Activated CD4-positive, alpha-beta memory T cell treated with anti-CD3 and anti-CD28 coated beads for 36 hours (primary cell): ENCODE measurements at regions of chr18 and their contacts with region 1.

Region 1: DNA sequence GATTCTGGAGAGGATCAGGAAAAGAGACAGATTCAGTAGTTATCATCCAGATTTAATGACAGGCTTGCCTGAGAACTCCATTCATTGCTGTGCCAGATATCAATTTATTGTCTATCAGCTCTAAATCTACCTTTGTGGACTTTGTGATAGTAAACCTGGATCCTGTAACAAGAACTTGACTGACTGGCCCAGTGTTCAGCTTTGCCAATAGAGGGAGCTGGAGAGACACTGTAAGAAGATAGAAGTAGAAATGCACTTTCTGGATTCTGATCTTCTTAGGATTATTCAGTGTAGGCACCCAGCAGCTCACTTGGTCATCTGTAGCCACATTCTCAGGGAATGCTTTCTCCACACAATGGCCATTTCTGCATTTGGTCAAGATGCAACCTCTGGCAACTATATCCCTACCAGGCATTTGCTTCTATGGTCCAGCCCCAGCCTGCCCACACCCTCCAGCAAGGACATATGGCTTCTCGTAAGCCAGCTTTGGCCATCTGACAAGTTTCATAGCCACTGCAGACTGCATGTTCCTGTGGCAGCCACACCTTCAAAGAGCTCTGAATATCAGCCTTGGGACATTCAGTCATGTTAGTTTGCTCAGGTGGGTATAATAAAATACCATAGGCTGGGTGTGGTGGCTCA is 6.1 kb upstream of the SERPINB8 start:
- DNase-seq: peak; percentile 61
- H3K4me3 Mint-ChIP-seq: no peak overlapping the region
- H3K27ac Mint-ChIP-seq: no peak overlapping the region
- H3K4me1 Mint-ChIP-seq: peaks cover 14% of the 10 kb centered on the region
- H3K27me3 Mint-ChIP-seq: peaks cover 13% of the 10 kb centered on the region

Region 2: DNA sequence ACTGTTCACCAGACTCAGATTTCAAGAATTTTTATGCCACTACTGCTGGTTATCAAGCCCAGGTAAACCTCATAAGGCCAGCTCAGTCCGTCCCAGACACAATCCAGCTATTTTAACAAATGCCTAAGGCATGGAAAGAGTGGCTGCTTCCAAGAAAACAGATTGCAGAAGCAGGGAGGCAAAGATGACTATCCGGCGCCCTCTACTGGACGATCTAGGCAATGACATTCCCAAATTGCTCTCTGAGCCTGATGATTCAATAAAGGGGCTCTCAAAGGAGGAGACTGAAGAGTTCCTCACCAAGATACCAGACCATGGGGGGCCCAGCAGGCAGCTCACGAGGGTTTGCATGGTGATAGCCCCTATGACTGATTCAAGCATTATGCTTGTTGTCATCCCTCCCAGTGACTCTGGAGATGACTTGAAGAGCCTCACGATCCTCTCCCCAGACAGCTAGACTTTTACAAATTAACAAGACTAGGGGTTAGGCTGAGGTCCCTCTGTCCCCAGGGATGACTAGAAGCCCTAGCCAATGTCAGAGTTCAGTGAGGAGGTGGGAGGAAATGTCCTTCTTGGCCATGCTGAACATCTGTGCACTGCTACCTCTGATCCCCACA is 31.2 kb after region 1 on chr18:
- CTCF ChIA-PET with region 1: interaction called, 21 read pairs
- POLR2A ChIA-PET with region 1: interaction called, 3 read pairs
- intact Hi-C with region 1: loop called (anchors 2 kb)
- DNase-seq: peak; percentile 56
- H3K4me3 Mint-ChIP-seq: no peak overlapping the region
- H3K27ac Mint-ChIP-seq: no peak overlapping the region
- H3K4me1 Mint-ChIP-seq: peaks cover 7% of the 10 kb centered on the region
- H3K27me3 Mint-ChIP-seq: no peaks in the 10 kb centered on the region